HEK293 (cell line): ENCODE measurements at regions of chr7 and their contacts with region 1.

Region 1: DNA sequence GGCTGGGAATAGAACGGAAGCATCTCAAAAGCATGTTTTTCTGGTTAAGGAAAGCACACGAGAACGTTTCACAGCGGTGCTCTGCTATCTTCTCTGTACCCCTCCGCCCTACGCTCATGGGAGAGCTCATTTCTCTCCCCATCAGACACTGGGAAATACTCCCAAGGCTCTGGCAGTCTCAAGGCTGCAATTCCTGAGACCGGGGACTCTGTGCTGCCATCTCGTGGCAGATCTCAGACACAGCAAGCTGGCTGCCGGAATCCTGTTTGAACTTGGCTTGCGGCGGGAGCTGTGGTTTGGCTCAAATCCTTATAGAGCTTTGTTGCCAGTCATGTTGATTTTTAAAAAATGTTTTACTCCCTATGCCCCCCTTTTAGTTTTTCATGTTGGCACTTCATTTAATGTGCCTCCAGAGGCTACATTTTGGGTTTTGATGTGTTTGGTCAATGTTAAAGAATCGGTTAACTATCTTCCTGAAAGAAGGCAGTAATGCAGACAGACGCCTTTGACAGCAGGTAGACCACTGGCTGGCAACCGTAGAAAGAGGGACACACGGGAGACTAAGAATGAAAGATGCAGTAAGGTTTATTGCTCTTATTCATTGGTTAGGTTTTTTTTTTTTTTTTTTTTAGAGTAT is 27.6 kb downstream of the BMPER start:
- H3K4me3 ChIP-seq: no peak overlapping the region
- H3K27ac ChIP-seq: no peak overlapping the region
- H3K4me1 ChIP-seq: peaks cover 3% of the 10 kb centered on the region; the same call in 1 of the 2 replicates
- CTCF ChIP-seq: 0 out of 2 replicates have a peak, but pooled peaks have one; percentile 21

Region 2: DNA sequence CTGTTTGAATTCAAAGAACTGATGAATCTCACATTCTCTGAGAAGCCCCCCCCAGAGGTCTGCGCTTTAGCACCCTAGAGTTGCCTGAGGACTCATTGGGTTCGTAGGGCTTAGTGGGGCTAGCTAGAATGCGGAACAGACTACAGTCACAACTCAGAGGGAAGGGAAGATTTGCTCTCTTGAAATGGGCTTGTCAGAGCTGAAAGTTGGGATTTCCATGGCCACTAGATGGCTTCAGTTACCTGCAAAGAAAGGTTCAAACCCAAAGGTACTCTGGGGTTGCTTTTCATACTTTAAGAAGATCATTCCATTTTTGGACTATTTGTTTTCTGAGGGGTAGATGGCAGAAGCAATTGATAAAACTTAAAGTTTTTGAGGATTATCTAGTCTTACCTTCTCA is 598.6 kb before region 1 on chr7:
- CTCF ChIA-PET with region 1: interaction called, 15 read pairs
- POLR2A ChIA-PET with region 1: no interaction called
- H3K4me3 ChIP-seq: no peak overlapping the region
- H3K27ac ChIP-seq: no peak overlapping the region
- H3K4me1 ChIP-seq: no peaks in the 10 kb centered on the region
- CTCF ChIP-seq: no peak

Region 3: GRCh38 chr7:33886149-33886623 is 46.8 kb before region 1 on chr7:
- CTCF ChIA-PET with region 1: interaction called, 10 read pairs
- POLR2A ChIA-PET with region 1: no interaction called
- H3K4me3 ChIP-seq: no peak overlapping the region
- H3K27ac ChIP-seq: no peak overlapping the region
- H3K4me1 ChIP-seq: no peaks in the 10 kb centered on the region
- CTCF ChIP-seq: peak; percentile 21; the same call in 1 of the 2 replicates

Region 4: GRCh38 chr7:33921216-33921938 is 11.6 kb before region 1 on chr7:
- CTCF ChIA-PET with region 1: interaction called, 34 read pairs
- POLR2A ChIA-PET with region 1: interaction called, 3 read pairs
- H3K4me3 ChIP-seq: no peak overlapping the region
- H3K27ac ChIP-seq: no peak overlapping the region
- H3K4me1 ChIP-seq: no peaks in the 10 kb centered on the region; the same call in 1 of the 2 replicates
- CTCF ChIP-seq: no peak

Region 5: GRCh38 chr7:33952824-33953223 is 19.9 kb after region 1 on chr7:
- CTCF ChIA-PET with region 1: interaction called, 10 read pairs
- POLR2A ChIA-PET with region 1: no interaction called
- H3K4me3 ChIP-seq: no peak overlapping the region
- H3K27ac ChIP-seq: no peak overlapping the region
- H3K4me1 ChIP-seq: 0 out of 2 replicates have a peak, but pooled peaks cover 3% of the 10 kb centered on the region
- CTCF ChIP-seq: no peak

Region 6: DNA sequence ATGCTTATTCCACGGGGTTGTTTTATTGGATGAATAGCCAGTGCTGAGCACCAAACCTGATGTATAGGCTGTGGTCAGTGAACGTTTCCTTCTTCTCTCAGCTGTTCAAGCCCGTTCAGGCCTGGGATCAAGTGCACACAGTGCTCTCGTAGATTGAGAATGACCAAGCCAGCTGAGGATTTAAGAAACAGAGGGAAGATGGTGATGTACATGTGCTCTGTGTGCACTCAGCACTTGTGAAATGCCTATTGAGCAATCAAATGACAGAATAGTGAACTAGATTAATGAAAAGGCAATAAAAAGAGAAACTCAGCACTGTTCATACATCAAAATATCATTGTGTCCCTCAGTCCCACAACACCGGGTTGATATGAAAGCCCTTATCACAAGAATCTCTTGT is 274.9 kb after region 1 on chr7:
- CTCF ChIA-PET with region 1: no interaction called
- POLR2A ChIA-PET with region 1: no interaction called
- H3K4me3 ChIP-seq: no peak overlapping the region
- H3K27ac ChIP-seq: no peak overlapping the region
- H3K4me1 ChIP-seq: no peaks in the 10 kb centered on the region
- CTCF ChIP-seq: no peak